ENCODE measurements at regions of chr10 and their contacts with region 1.

Region 1: GRCh38 chr10:5854106-5854570 is 35.6 kb downstream of the ANKRD16 start:
- DNase-seq: no peak
- H3K4me3 ChIP-seq: no peak overlapping the region
- H3K27ac ChIP-seq: no peak overlapping the region
- H3K27me3 ChIP-seq: peaks cover 2% of the 10 kb centered on the region
- CTCF ChIP-seq: no peak

Region 2: DNA sequence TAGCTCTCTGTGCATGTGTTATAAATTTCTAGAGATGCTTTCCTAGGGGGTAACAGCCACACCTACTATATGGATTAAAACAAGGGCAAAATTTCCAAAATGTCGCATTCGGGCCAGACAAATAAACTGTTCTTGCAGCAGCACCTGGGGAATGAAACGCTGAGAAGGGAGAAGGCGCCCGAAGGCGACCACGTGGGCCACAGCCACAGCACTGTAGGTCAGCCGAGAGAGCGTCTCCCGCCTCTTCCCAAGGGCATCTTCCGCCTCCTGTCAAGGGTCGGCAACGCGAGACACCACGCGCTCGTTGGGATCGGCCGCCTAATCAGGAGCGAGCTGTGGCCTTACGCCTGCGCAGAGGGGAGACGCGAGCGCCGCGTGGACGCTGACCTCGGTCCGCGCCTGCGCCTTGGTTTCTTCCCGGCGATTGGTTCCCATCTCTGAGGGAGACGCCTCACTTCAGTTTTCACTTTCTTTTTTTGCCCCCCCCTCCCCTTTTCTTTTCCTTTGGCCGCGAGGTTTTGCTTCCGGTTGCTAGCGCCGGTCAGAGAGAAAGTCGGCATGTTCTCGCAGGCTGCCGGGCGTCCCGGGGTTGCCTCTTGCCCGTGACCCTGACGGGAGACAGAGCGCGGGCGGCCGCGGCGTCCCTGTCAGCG is 169.7 kb before region 1 on chr10 and contains the start of gene TASOR2:
- CTCF ChIA-PET with region 1: no interaction called
- POLR2A ChIA-PET with region 1: interaction called, 10 read pairs
- DNase-seq: peak; percentile 94
- H3K4me3 ChIP-seq: peak within 1 kb of the TSS; percentile 94
- H3K27ac ChIP-seq: peak within 1 kb of the TSS; percentile 47
- H3K27me3 ChIP-seq: no peaks in the 10 kb centered on the region
- CTCF ChIP-seq: no peak
- polyA plus RNA-seq, gene TASOR2: 37.5 and 54.1 TPM in 2 replicates

Region 3: DNA sequence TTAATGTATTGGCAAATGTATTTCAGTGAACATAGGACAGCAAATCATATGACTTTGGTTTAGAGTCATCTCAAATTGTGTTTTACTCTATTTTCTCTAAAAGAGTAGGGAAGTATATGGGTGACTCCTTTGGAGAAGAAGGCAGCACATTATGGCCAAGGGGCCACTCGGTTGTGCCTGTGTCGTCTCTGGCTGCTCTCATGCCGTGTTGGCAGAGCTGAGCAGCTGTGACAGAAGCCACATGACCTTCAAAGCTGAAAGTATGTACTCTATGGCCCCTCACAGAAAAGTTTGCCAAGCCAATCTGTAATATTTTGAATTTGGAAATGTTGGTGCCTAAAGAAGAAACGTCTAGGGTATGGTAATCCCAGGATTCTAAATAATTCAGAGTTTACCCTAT is 122.0 kb before region 1 on chr10:
- CTCF ChIA-PET with region 1: no interaction called
- POLR2A ChIA-PET with region 1: no interaction called
- DNase-seq: no peak
- H3K4me3 ChIP-seq: no peak overlapping the region
- H3K27ac ChIP-seq: no peak overlapping the region
- H3K27me3 ChIP-seq: no peaks in the 10 kb centered on the region
- CTCF ChIP-seq: no peak

Region 4: GRCh38 chr10:5830629-5831445 is 23.3 kb before region 1 on chr10:
- CTCF ChIA-PET with region 1: no interaction called
- POLR2A ChIA-PET with region 1: no interaction called
- DNase-seq: no peak
- H3K4me3 ChIP-seq: no peak overlapping the region
- H3K27ac ChIP-seq: no peak overlapping the region
- H3K27me3 ChIP-seq: no peaks in the 10 kb centered on the region
- CTCF ChIP-seq: no peak

Region 5: DNA sequence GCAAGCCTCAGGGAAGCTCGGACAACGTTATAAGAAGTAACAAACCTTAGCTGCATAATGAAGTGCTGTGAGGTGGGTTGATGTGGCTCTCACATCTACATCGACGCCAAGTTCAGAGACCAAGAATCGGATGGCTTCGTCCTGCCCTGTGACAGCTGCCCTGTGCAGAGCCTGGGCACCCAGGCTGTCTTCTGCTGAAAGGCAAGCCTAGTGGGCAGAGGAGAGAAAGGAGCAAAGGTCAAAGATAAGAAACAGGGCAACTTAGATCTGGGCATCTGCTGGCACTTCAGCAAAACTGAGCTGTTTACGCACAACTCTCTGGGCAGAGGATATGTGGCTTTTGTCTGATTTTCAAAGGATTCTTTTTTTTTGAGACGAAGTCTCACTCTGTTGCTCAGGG is 28.8 kb after region 1 on chr10:
- CTCF ChIA-PET with region 1: no interaction called
- POLR2A ChIA-PET with region 1: no interaction called
- DNase-seq: no peak
- H3K4me3 ChIP-seq: no peak overlapping the region
- H3K27ac ChIP-seq: no peak overlapping the region
- H3K27me3 ChIP-seq: no peaks in the 10 kb centered on the region
- CTCF ChIP-seq: no peak